ENCODE measurements at regions of chr1 and their contacts with region 1.

Region 1: GRCh38 chr1:213244664-213245091 is 193.6 kb downstream of the RPS6KC1 start:
- DNase-seq: peak in 1 of 2 experiments; percentile 67
- H3K4me3 ChIP-seq: no peak overlapping the region
- H3K4me3 Mint-ChIP-seq: no peak overlapping the region
- H3K27ac Mint-ChIP-seq: peak overlapping the region; percentile 50
- H3K4me1 ChIP-seq: peaks cover 15% of the 10 kb centered on the region
- H3K4me1 Mint-ChIP-seq: peaks cover 27% of the 10 kb centered on the region
- H3K27me3 ChIP-seq: no peaks in the 10 kb centered on the region
- H3K27me3 Mint-ChIP-seq: no peaks in the 10 kb centered on the region
- CTCF ChIP-seq: peak; percentile 76 to 78

Region 2: DNA sequence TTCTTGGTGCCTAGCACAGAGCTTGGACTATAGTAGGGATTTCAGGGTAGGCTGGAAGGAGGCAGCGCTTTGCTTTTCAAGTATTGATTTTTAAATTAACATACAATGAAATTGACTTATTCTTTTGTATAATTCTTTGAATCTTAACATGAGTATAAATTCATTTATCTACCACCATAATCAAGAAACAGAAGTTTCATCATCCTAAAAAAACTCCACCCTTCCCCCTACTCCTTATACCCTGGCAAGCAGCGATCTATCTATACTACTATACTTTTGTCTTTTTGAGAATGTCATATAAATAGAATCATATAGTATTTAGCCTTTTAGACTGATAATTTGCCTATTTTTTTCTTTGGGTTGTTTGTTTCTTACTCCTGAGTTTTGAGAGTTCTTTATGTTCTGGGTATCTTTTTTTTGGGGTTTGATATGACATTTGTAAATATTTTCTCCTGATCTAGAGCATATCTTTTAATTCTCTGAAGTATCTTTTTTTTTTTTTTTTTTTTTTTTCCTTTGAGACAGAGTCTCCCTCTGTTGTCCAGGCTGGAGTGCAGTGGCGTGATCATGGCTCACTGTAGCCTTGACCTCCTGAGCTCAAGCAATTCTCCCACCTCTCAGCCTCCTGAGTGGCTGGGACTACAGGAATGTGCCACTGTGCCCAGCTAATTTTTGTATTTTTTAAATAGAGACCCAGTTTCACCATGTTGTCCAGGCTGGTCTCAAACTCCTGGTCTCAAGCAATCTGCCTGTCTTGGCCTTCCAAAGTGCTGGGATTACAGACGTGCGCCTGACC is 187.2 kb before region 1 on chr1:
- CTCF ChIA-PET with region 1: no interaction called
- POLR2A ChIA-PET with region 1: no interaction called
- intact Hi-C with region 1: no loop called
- DNase-seq: no peak
- H3K4me3 ChIP-seq: no peak overlapping the region
- H3K4me3 Mint-ChIP-seq: no peak overlapping the region
- H3K27ac Mint-ChIP-seq: no peak overlapping the region
- H3K4me1 ChIP-seq: peaks cover 7% of the 10 kb centered on the region; the same call in 1 of the 2 replicates
- H3K4me1 Mint-ChIP-seq: peaks cover 6% of the 10 kb centered on the region
- H3K27me3 ChIP-seq: no peaks in the 10 kb centered on the region
- H3K27me3 Mint-ChIP-seq: no peaks in the 10 kb centered on the region
- CTCF ChIP-seq: no peak

Region 3: DNA sequence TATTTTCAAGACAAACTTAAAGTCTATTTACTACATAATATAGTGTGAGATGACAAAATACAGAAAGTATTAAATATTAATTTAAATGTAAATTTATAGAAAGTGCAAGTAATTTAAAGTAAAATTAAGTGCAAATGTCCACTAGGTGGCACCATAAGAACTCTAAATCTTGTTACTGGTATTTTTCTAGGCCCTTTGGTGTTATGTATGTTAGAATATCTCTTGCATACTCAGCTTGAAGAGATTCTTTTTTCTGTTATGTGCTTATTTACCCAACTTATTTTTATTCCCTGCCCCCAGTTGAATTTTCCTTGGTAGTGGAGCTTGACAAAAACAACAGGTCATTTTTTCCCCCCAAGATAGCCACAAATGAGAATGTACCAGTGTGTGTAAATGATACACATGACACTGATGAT is 122.2 kb before region 1 on chr1:
- CTCF ChIA-PET with region 1: no interaction called
- POLR2A ChIA-PET with region 1: no interaction called
- intact Hi-C with region 1: loop called (anchors 2 kb)
- DNase-seq: peak in 1 of 2 experiments; percentile 39
- H3K4me3 ChIP-seq: no peak overlapping the region
- H3K4me3 Mint-ChIP-seq: no peak overlapping the region
- H3K27ac Mint-ChIP-seq: peak overlapping the region; percentile 65
- H3K4me1 ChIP-seq: peaks cover 22% of the 10 kb centered on the region
- H3K4me1 Mint-ChIP-seq: peaks cover 27% of the 10 kb centered on the region
- H3K27me3 ChIP-seq: no peaks in the 10 kb centered on the region
- H3K27me3 Mint-ChIP-seq: no peaks in the 10 kb centered on the region
- CTCF ChIP-seq: peak in 1 of 2 experiments; percentile 36

Region 4: DNA sequence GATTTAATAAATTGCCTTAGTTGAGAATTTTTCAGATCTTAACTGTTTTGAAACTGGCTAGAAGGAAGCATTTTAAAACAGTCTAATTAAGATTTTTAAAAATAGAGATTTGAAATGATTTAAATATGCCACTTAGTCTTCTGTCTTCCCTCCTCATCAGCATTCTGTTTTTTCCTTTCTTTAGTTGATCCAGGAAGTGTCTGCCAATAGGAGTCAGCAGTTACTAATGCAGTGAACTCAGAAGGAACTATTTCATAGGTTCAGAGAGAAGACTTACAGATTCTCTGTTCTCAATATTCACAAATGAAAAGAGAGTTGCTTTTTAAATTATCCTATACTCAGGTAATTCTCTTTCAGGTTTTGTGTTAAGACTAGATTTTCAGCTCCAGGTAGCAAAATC is 109.1 kb before region 1 on chr1:
- CTCF ChIA-PET with region 1: no interaction called
- POLR2A ChIA-PET with region 1: no interaction called
- intact Hi-C with region 1: no loop called
- DNase-seq: no peak
- H3K4me3 ChIP-seq: no peak overlapping the region
- H3K4me3 Mint-ChIP-seq: no peak overlapping the region
- H3K27ac Mint-ChIP-seq: no peak overlapping the region
- H3K4me1 ChIP-seq: peaks cover 26% of the 10 kb centered on the region
- H3K4me1 Mint-ChIP-seq: peaks cover 36% of the 10 kb centered on the region
- H3K27me3 ChIP-seq: no peaks in the 10 kb centered on the region
- H3K27me3 Mint-ChIP-seq: no peaks in the 10 kb centered on the region
- CTCF ChIP-seq: no peak

Region 5: DNA sequence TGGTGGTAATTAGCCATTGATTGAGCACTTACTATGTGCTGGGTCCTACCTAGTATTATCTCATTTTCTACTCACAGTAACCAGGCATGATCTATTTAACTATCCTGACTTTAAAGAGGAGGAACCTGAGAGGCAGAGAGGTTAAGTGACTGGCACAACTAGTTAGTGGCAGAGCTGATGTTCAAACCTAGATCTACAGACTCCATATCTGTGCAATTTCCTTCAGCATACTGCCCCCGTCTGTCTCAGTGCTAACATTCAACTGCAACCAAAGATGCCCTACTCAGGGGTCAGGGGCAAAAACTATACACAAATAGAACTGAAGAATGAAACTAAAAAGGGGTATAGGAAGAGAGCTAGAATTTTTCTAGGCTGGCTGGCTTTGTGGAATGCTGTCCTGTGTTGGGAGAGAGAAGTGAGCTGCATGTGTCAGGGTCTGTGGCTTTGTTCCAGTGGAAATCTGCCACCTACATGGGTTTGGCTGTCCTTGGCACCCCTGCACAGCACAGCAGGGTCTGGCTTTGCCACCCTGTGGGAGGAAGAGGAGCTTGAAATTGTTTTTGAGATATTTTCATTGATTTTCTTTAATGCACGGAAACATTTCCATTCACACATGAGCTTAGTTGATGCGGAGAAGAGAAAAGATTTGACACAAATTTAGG is 174.8 kb after region 1 on chr1:
- CTCF ChIA-PET with region 1: interaction called, 6 read pairs
- POLR2A ChIA-PET with region 1: no interaction called
- intact Hi-C with region 1: loop called (anchors 1 kb)
- DNase-seq: peak in 1 of 2 experiments; percentile 23
- H3K4me3 ChIP-seq: no peak overlapping the region
- H3K4me3 Mint-ChIP-seq: no peak overlapping the region
- H3K27ac Mint-ChIP-seq: no peak overlapping the region
- H3K4me1 ChIP-seq: peaks cover 24% of the 10 kb centered on the region
- H3K4me1 Mint-ChIP-seq: peaks cover 13% of the 10 kb centered on the region
- H3K27me3 ChIP-seq: no peaks in the 10 kb centered on the region
- H3K27me3 Mint-ChIP-seq: no peaks in the 10 kb centered on the region
- CTCF ChIP-seq: peak in 1 of 2 experiments; percentile 13

Region 6: GRCh38 chr1:213564215-213564659 is 319.6 kb after region 1 on chr1:
- CTCF ChIA-PET with region 1: no interaction called
- POLR2A ChIA-PET with region 1: no interaction called
- intact Hi-C with region 1: loop called (anchors 2 kb)
- DNase-seq: peak in 1 of 2 experiments; percentile 54
- H3K4me3 ChIP-seq: no peak overlapping the region
- H3K4me3 Mint-ChIP-seq: no peak overlapping the region
- H3K27ac Mint-ChIP-seq: no peak overlapping the region
- H3K4me1 ChIP-seq: peaks cover 7% of the 10 kb centered on the region
- H3K4me1 Mint-ChIP-seq: peaks cover 12% of the 10 kb centered on the region
- H3K27me3 ChIP-seq: no peaks in the 10 kb centered on the region
- H3K27me3 Mint-ChIP-seq: no peaks in the 10 kb centered on the region
- CTCF ChIP-seq: peak; percentile 48 to 64

Region 7: DNA sequence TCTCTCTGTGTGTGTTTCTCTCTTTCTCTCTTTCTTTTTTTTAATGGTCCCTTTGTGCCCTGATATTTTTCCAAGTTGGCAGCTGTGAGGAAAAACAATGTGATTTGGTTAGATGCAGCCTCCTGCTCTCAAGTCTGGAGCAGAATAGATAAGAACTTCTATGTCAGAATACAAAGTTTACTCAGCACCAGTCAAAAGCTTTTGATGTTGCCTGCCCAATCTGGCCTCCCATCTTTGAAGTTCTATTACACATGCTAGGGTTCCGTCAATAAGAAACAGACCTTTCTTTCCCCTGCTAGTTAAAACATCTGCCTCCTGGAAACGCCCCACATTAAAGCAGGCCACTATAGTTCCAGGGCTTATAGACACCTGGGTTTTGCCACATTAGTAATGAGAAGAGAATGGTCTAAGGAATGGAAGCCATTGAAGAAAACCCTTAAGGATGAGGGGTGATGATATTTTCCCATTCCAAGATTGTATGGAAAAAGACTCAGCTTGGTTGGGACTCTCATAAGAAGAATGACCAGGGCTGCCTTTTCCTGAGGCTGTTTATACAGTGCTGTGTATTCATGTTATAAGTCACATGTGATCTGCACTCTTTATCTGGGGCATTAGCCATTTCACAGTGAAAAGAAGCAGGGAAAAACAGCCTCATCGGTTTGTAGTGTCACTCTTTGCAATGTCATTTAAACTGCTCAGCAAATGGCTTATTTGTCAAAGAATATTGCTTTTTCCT is 328.4 kb after region 1 on chr1:
- CTCF ChIA-PET with region 1: no interaction called
- POLR2A ChIA-PET with region 1: no interaction called
- intact Hi-C with region 1: loop called (anchors 2 kb)
- DNase-seq: peak; percentile 71 to 73
- H3K4me3 ChIP-seq: no peak overlapping the region
- H3K4me3 Mint-ChIP-seq: peak overlapping the region; percentile 27
- H3K27ac Mint-ChIP-seq: peak overlapping the region; percentile 85
- H3K4me1 ChIP-seq: peaks cover 59% of the 10 kb centered on the region
- H3K4me1 Mint-ChIP-seq: peaks cover 64% of the 10 kb centered on the region
- H3K27me3 ChIP-seq: no peaks in the 10 kb centered on the region
- H3K27me3 Mint-ChIP-seq: no peaks in the 10 kb centered on the region
- CTCF ChIP-seq: no peak

Region 8: GRCh38 chr1:213669964-213670691 is 425.4 kb after region 1 on chr1:
- CTCF ChIA-PET with region 1: no interaction called
- POLR2A ChIA-PET with region 1: no interaction called
- intact Hi-C with region 1: no loop called
- DNase-seq: peak; percentile 56 to 67
- H3K4me3 ChIP-seq: no peak overlapping the region
- H3K4me3 Mint-ChIP-seq: no peak overlapping the region
- H3K27ac Mint-ChIP-seq: no peak overlapping the region
- H3K4me1 ChIP-seq: peaks cover 11% of the 10 kb centered on the region
- H3K4me1 Mint-ChIP-seq: peaks cover 12% of the 10 kb centered on the region
- H3K27me3 ChIP-seq: no peaks in the 10 kb centered on the region
- H3K27me3 Mint-ChIP-seq: no peaks in the 10 kb centered on the region
- CTCF ChIP-seq: peak; percentile 9 to 21

Region 9: DNA sequence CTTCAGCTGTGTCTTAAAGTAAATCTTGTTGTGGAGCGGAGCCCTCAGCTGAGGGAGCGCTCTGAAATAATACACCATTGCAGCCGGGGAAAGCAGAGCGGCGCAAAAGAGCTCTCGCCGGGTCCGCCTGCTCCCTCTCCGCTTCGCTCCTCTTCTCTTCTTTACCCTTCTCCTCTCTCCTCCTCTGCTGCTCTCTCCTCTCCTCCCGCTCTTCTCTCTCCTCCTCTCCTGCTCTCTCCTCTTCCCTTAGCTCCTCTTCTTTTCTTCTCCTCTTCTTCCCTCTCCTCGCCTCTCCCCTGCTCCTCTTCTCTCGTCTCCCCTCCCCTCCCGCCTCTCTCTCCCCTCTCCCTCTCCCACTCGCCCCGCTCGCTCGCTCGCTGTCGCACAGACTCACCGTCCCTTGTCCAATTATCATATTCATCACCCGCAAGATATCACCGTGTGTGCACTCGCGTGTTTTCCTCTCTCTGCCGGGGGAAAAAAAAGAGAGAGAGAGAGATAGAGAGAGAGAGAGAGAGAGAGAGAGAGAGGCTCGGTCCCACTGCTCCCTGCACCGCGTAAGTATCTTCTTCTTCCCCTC is 743.3 kb after region 1 on chr1 and contains the start of gene PROX1:
- CTCF ChIA-PET with region 1: no interaction called
- POLR2A ChIA-PET with region 1: no interaction called
- intact Hi-C with region 1: loop called (anchors 2 kb)
- DNase-seq: peak in 1 of 2 experiments; percentile 87
- H3K4me3 ChIP-seq: peak within 1 kb of the TSS; percentile 63
- H3K4me3 Mint-ChIP-seq: peak within 1 kb of the TSS; percentile 99
- H3K27ac Mint-ChIP-seq: peak within 1 kb of the TSS; percentile 89
- H3K4me1 ChIP-seq: peaks cover 25% of the 10 kb centered on the region
- H3K4me1 Mint-ChIP-seq: peaks cover 21% of the 10 kb centered on the region
- H3K27me3 ChIP-seq: no peaks in the 10 kb centered on the region; the same call in 1 of the 2 replicates
- H3K27me3 Mint-ChIP-seq: peaks cover 8% of the 10 kb centered on the region
- CTCF ChIP-seq: peak in 1 of 2 experiments; percentile 32
- total RNA-seq, gene PROX1: 17.6 and 24.5 TPM in 2 replicates

Region 10: GRCh38 chr1:214187121-214187900 is 942.6 kb after region 1 on chr1:
- CTCF ChIA-PET with region 1: no interaction called
- POLR2A ChIA-PET with region 1: no interaction called
- intact Hi-C with region 1: loop called (anchors 10 kb)
- DNase-seq: peak in 1 of 2 experiments; percentile 31
- H3K4me3 ChIP-seq: peak overlapping the region; percentile 49
- H3K4me3 Mint-ChIP-seq: peak overlapping the region; percentile 70
- H3K27ac Mint-ChIP-seq: no peak overlapping the region
- H3K4me1 ChIP-seq: peaks cover 19% of the 10 kb centered on the region
- H3K4me1 Mint-ChIP-seq: peaks cover 20% of the 10 kb centered on the region
- H3K27me3 ChIP-seq: no peaks in the 10 kb centered on the region; the same call in 1 of the 2 replicates
- H3K27me3 Mint-ChIP-seq: no peaks in the 10 kb centered on the region
- CTCF ChIP-seq: no peak

Measured in Caco-2 (cell line).